ENCODE measurements at regions of chr1 and their contacts with region 1.

Region 1: GRCh38 chr1:41432481-41433280 is 51.8 kb downstream of the EDN2 start:
- DNase-seq: peak; percentile 60 to 97 (median 84)

Region 2: GRCh38 chr1:41268154-41268770 is 164.4 kb before region 1 on chr1:
- intact Hi-C with region 1: loop called (anchors 1 kb)
- DNase-seq: peak; percentile 67 to 97 (median 84)

Region 3: GRCh38 chr1:41282679-41283317 is 149.9 kb before region 1 on chr1:
- intact Hi-C with region 1: loop called (anchors 5 kb)
- DNase-seq: peak in 9 of 10 donors; percentile 32 to 90 (median 53)

Region 4: DNA sequence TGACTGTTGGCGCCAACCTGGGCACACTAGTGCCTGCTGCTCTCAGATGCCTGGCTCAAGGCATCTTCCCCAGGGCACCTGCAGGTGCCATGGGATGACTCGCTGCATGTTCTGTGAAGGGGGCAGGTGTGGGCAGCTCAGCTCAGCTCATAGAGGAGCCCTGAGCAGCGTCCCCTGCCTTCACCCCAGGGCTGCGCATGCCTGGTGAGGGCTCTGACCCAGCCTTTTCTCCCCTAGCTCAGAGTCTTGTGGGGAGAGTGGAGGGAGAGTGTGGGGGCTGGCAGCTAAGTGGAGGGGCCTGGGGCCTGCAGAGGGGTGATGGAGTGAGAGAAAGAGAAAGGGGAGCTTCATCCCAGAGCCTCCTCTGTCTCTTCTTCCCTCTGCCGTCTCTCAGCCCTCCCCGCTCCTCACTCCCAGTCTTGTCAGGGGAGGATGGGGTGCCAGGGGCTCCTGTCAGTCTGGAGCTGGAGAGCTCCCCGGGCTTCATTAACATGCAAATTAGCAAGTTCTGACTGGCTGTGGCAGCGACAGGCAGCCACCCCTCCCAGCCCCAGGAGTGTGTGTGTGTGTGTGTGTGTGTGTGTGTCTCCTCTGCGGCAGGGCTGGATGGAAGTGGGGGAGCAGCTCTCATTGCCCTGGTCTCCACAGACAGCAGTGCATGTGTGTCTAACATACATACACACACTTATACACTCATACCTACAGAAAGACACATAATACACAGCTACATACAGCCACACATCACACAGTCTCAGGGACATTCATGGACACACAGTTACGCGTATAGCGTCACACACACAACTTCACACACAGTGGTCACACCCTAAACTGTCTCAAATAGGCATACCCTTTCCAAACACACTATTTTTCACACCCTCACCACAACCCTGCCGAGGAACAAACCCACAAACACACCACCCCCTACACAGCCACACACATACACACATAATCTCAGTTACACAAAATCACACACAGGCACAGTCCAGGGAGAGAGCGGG is 37.4 kb before region 1 on chr1:
- intact Hi-C with region 1: no loop called
- DNase-seq: peak in 7 of 10 donors; percentile 27 to 90 (median 59)

Region 5: DNA sequence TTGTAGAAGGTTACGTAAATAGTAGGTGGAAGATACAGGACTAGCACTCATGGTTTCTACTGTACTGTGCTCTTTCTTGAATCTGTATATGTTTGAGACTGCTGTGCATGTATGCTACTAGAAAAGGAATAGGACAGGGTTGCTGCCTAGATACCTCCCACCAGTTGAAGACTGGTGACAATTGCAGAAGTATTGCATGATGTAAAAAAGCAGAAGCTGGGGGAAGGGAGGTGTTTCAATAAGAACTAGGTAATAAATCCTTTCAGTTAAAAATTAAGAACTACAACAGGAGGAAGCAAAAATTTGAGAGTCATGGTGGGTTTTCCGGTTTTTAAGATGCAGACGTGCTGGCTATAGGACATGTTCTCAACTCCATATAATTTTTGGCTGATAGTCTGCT is 1118.5 kb after region 1 on chr1:
- intact Hi-C with region 1: no loop called
- DNase-seq: no peak